ENCODE measurements at regions of chr4 and their contacts with region 1.

Region 1: DNA sequence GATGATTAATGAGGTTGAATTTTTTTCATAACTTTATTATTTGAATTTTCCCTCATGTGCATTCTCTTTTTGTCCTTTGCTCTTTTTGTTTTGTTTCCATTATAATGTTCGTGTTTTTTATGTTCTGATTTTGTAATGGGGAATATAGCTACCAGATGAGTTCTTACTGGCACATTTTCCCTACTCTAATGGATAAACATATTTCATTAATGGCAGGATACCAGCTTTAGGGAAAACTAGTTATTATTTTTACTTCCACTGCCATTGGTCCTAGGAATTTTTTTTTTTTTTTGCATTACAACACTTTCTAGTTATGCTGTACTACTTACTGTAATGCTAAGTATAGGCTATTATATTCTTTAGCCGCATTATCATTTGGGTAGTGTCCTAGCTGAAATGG is 286.3 kb downstream of the SPRY1 start:
- H3K4me3 ChIP-seq: no peak overlapping the region
- H3K27ac ChIP-seq: no peak overlapping the region
- H3K4me1 ChIP-seq: no peaks in the 10 kb centered on the region
- CTCF ChIP-seq: no peak

Region 2: GRCh38 chr4:122129061-122129460 is 1553.9 kb before region 1 on chr4:
- CTCF ChIA-PET with region 1: interaction called, 11 read pairs
- POLR2A ChIA-PET with region 1: no interaction called
- H3K4me3 ChIP-seq: no peak overlapping the region
- H3K27ac ChIP-seq: no peak overlapping the region
- H3K4me1 ChIP-seq: no peaks in the 10 kb centered on the region
- CTCF ChIP-seq: no peak

Measured in HEK293 (cell line).